AG04450 (cell line): ENCODE measurements at regions of chr5 and their contacts with region 1.

Region 1: DNA sequence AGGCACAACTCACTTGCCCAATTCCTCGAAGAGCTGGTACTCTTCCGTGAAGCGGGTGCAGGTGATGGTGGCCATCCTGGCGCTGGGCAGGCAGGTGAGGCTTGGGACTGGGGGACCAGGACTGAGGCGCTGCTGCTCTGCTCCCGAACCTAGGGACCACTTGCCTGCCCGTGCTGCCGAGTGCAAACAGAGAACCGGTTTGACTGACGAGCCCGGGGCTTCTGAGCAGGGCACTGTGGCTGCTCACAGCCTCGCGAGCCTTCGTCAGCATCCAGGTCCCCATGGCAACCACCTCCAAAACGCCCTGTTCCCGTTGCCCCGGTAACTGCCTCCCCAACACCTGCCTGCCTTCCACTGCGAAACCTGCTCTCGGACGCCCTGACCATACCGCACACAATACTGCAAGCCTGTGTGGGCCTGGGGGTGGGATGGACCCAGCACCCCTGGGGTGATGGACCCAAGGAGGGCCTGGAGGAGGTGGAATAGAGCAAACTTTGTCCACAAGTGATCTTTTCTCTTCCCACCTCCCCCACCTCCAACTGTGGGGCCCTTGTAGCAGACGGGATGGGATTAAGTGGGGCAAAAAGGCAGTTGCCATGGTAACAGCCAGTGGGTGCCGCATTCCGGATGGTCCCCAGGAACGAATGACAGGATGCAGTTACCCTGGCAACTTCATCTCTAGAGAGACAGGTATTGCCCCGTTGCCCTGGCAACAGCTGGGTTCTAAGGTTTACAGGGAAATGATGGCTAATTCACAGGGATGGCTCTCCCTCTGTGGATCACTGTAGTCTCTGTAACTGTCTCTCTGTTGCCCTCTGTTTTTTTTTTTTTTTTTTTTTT is at the start of gene CAMK2A:
- DNase-seq: no peak
- H3K4me3 ChIP-seq: no peak within 1 kb of the TSS
- H3K27ac ChIP-seq: no peak within 1 kb of the TSS
- H3K27me3 ChIP-seq: no peaks in the 10 kb centered on the region
- CTCF ChIP-seq: no peak
- polyA plus RNA-seq, gene CAMK2A: 0.37 and 0.46 TPM in 2 replicates

Region 2: GRCh38 chr5:150377964-150378694 is 88.4 kb after region 1 on chr5:
- CTCF ChIA-PET with region 1: no interaction called
- POLR2A ChIA-PET with region 1: interaction called, 12 read pairs
- DNase-seq: peak; percentile 95
- H3K4me3 ChIP-seq: no peak overlapping the region
- H3K27ac ChIP-seq: peak overlapping the region; percentile 98
- H3K27me3 ChIP-seq: no peaks in the 10 kb centered on the region
- CTCF ChIP-seq: no peak